ENCODE measurements at regions of chr3 and their contacts with region 1.

Region 1: GRCh38 chr3:165185707-165186327 is 10.4 kb downstream of the SLITRK3 start:
- DNase-seq: peak; percentile 35
- H3K4me3 ChIP-seq: no peak overlapping the region
- H3K27ac ChIP-seq: no peak overlapping the region
- H3K4me1 ChIP-seq: no peaks in the 10 kb centered on the region
- H3K27me3 ChIP-seq: no peaks in the 10 kb centered on the region
- CTCF ChIP-seq: peak; percentile 64 to 73
- POLR2A ChIP-seq: no peak

Region 2: GRCh38 chr3:163916596-163917554 is 1268.9 kb before region 1 on chr3:
- CTCF ChIA-PET with region 1: no interaction called
- POLR2A ChIA-PET with region 1: no interaction called
- dilution Hi-C with region 1: no loop called
- intact Hi-C with region 1: loop called (anchors 5 kb)
- DNase-seq: no peak
- H3K4me3 ChIP-seq: no peak overlapping the region
- H3K27ac ChIP-seq: no peak overlapping the region
- H3K4me1 ChIP-seq: no peaks in the 10 kb centered on the region
- H3K27me3 ChIP-seq: no peaks in the 10 kb centered on the region
- CTCF ChIP-seq: no peak
- POLR2A ChIP-seq: no peak

Region 3: DNA sequence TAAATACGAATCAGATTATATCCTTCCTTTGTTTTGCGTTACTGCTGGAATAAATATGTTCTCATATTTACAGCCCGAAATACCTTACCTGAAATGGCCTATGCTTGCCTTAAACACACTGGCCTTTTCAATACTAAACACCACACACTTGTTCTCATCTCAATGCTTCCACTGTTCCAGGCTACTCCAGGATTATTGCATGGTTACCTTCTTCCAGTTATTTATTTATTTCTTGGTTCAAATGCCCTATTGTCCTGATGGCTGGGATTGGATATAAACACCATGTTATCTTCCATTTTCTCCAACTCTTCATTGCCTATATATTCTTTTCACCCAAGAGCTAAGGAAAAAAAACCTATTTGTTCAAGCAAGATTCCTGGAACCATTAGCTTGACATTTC is 232.9 kb before region 1 on chr3:
- CTCF ChIA-PET with region 1: no interaction called
- POLR2A ChIA-PET with region 1: no interaction called
- dilution Hi-C with region 1: no loop called
- intact Hi-C with region 1: no loop called
- DNase-seq: no peak
- H3K4me3 ChIP-seq: no peak overlapping the region
- H3K27ac ChIP-seq: no peak overlapping the region
- H3K4me1 ChIP-seq: no peaks in the 10 kb centered on the region
- H3K27me3 ChIP-seq: no peaks in the 10 kb centered on the region
- CTCF ChIP-seq: no peak
- POLR2A ChIP-seq: no peak